Right ventricle myocardium inferior (tissue), 1 donor: ENCODE measurements at regions of chr4 and their contacts with region 1.

Region 1: DNA sequence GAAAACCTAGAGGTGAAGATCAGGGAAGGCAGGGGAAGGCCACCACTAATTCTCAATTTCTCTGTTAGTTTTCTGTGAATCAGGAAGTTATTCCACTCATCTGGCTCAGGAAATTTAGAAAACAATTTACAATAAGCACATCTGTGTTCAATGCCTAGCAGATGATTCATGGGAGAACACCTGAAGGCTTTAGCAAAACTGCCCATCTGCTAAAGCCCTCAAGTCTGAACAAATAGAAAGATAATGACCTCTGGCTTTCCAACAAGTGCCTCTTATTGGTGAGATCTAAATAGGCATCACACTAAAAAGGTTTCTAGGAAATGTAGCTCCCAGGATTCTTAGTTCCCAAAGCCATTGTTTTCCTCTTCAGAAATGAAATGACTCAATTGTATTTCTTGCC is 122.1 kb upstream of the GNPDA2 start:
- DNase-seq: no peak
- ATAC-seq: no peak

Region 2: DNA sequence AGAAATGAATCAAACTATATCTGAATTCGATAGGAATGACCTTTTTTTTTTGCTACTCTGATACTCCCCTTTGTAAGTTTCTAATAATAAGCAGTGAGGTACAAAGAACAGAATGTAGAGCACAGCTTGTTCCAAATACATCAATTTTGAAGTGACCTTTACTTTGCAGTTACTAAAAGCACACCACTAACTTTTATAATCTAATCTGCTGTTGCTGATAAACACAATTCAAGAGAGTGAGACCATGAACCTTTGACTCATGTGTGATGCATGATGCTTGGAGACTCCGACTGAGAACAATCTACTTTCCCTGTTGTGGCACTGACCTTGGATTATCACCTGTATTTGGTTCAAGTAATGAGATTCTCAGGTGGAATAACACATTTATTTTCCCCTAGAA is 30.5 kb before region 1 on chr4:
- intact Hi-C with region 1: loop called (anchors 2 kb)
- DNase-seq: no peak
- ATAC-seq: peak; percentile 88

Region 3: GRCh38 chr4:45662997-45663396 is 814.5 kb after region 1 on chr4:
- intact Hi-C with region 1: loop called (anchors 10 kb)
- DNase-seq: no peak
- ATAC-seq: peak; percentile 96